ENCODE measurements at regions of chr1 and their contacts with region 1.

Region 1: GRCh38 chr1:22018583-22019559 is 17.4 kb downstream of the CELA3A start:
- DNase-seq: peak; percentile 41 to 83 (median 67)
- H3K4me3 ChIP-seq: no peak overlapping the region
- H3K4me3 Mint-ChIP-seq: peak overlapping the region in 6 of 8 donors; percentile 54 to 80 (median 67)
- H3K27ac ChIP-seq: peak overlapping the region; percentile 51
- H3K27ac Mint-ChIP-seq: peak overlapping the region; percentile 65 to 98 (median 96)
- H3K4me1 ChIP-seq: peaks cover 37% of the 10 kb centered on the region
- H3K4me1 Mint-ChIP-seq: peaks cover 20 to 26% (median 23%) of the 10 kb centered on the region in 4 donors
- H3K27me3 ChIP-seq: no peaks in the 10 kb centered on the region
- H3K27me3 Mint-ChIP-seq: no peaks in the 10 kb centered on the region

Region 2: GRCh38 chr1:22039594-22040285 is 20.9 kb after region 1 on chr1:
- CTCF ChIA-PET with region 1: interaction called, 113 read pairs
- POLR2A ChIA-PET with region 1: interaction called, 339 read pairs
- intact Hi-C with region 1: no loop called
- DNase-seq: peak; percentile 93 to 99 (median 98)
- H3K4me3 ChIP-seq: peak overlapping the region; percentile 24 to 53
- H3K4me3 Mint-ChIP-seq: peak overlapping the region; percentile 78 to 89 (median 84)
- H3K27ac ChIP-seq: peak overlapping the region; percentile 86
- H3K27ac Mint-ChIP-seq: peak overlapping the region; percentile 94 to 100 (median 99)
- H3K4me1 ChIP-seq: peaks cover 75% of the 10 kb centered on the region
- H3K4me1 Mint-ChIP-seq: peaks cover 40 to 76% (median 54%) of the 10 kb centered on the region in 4 donors
- H3K27me3 ChIP-seq: no peaks in the 10 kb centered on the region
- H3K27me3 Mint-ChIP-seq: no peaks in the 10 kb centered on the region

Region 3: GRCh38 chr1:22077728-22078127 is 58.9 kb after region 1 on chr1:
- CTCF ChIA-PET with region 1: interaction called, 11 read pairs
- POLR2A ChIA-PET with region 1: interaction called, 38 read pairs
- intact Hi-C with region 1: no loop called
- DNase-seq: no peak
- H3K4me3 ChIP-seq: no peak overlapping the region
- H3K4me3 Mint-ChIP-seq: peak overlapping the region in 5 of 8 donors; percentile 36 to 76 (median 49)
- H3K27ac ChIP-seq: no peak overlapping the region
- H3K27ac Mint-ChIP-seq: peak overlapping the region in 5 of 7 donors; percentile 4 to 82 (median 57)
- H3K4me1 ChIP-seq: peaks cover 92% of the 10 kb centered on the region
- H3K4me1 Mint-ChIP-seq: peaks cover 63 to 96% (median 77%) of the 10 kb centered on the region in 4 donors
- H3K27me3 ChIP-seq: no peaks in the 10 kb centered on the region
- H3K27me3 Mint-ChIP-seq: no peaks in the 10 kb centered on the region

Region 4: DNA sequence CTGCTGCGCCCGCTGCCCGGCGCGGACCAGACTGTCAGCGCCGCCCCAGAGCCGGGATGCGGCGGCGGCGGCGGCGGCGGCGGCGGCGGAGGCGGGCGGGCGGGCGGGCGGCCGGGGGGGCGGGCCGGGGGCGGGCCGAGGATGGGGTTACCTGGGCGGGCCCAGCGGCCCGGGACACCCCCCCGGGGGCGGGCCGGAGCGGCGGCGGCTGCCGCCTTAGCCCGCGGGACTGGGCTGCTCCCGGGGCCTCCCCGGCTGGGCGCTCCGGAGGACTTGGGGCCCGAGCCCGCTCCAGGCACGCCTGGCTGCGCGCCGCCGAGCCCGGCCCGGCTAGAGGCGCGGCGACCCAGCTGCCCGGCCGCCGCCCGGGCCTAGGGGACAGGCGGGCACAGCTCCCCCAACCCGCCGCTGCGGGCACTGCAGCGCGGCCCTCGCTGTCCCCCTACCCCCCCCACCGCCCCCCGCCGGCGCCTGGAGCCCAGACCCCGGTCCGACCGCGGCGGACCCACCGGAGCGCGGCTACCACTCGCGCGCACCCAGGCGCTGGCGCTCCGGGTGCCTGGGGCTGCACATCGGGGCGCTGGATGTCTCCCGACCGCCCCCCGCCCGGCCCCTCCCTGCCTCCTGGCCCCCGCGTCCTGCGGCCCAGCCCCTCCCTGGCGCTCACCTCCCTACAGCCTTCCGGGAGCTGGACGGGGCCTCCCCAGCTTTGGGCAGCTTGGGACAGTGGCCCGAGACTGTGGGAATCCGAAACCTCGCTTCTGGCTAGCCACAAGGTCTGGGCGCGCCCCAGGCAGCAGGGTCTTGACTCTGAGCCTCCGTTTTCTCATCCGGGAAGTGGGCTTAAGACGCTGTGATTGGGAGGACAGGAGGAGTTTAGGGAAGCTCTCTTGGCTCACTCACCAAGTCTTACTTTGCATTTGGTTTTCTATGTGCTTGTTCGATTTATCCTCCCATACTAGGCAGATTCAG is 124.5 kb after region 1 on chr1 and contains the start of gene WNT4:
- CTCF ChIA-PET with region 1: no interaction called
- POLR2A ChIA-PET with region 1: no interaction called
- intact Hi-C with region 1: no loop called
- DNase-seq: peak in 3 of 5 donors; percentile 15 to 24 (median 21)
- H3K4me3 ChIP-seq: no peak within 1 kb of the TSS
- H3K4me3 Mint-ChIP-seq: peak within 1 kb of the TSS; percentile 64 to 81 (median 73)
- H3K27ac ChIP-seq: no peak within 1 kb of the TSS
- H3K27ac Mint-ChIP-seq: peak within 1 kb of the TSS in 1 of 7 donors; percentile 64
- H3K4me1 ChIP-seq: no peaks in the 10 kb centered on the region
- H3K4me1 Mint-ChIP-seq: peaks cover 4 to 14% (median 9%) of the 10 kb centered on the region in 4 donors
- H3K27me3 ChIP-seq: peaks cover 13% of the 10 kb centered on the region
- H3K27me3 Mint-ChIP-seq: peaks cover 35 to 36% of the 10 kb centered on the region in 2 donors
- total RNA-seq, gene WNT4: not detected

Measured in CD4-positive, alpha-beta memory T cell (primary cell).